ENCODE measurements at regions of chr1 and their contacts with region 1.

Region 1: DNA sequence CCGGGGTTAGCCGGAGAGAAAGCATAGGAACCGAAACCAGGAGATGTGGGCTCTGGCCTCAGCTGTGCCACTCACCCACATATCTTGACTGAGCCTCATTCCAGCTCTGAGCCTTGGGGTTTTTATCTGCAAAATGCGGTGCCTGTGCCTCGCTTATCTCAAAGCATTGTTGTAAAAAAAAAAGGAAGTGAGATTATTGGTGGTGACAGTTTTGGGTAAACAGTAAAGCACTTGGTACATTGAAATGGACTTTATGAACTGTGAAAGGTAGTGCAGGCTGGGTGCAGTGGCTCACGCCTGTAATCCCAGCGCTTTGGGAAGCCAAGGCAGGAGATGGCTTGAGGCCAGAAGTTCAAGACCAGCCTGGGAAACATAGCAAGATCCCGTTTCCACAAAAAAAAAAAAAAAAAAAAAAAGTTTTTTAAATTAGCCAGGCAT is 3.8 kb downstream of the PTAFR start:
- DNase-seq: peak; percentile 65
- H3K4me3 Mint-ChIP-seq: peak overlapping the region; percentile 10
- H3K27ac Mint-ChIP-seq: no peak overlapping the region
- H3K4me1 Mint-ChIP-seq: peaks cover 37% of the 10 kb centered on the region
- H3K27me3 Mint-ChIP-seq: peaks cover 56% of the 10 kb centered on the region

Region 2: GRCh38 chr1:28132171-28133167 is 40.3 kb before region 1 on chr1:
- intact Hi-C with region 1: no loop called
- DNase-seq: no peak
- H3K4me3 Mint-ChIP-seq: no peak overlapping the region
- H3K27ac Mint-ChIP-seq: no peak overlapping the region
- H3K4me1 Mint-ChIP-seq: peaks cover 7% of the 10 kb centered on the region
- H3K27me3 Mint-ChIP-seq: peaks cover 86% of the 10 kb centered on the region

Region 3: GRCh38 chr1:28144203-28145135 is 28.3 kb before region 1 on chr1:
- intact Hi-C with region 1: loop called (anchors 1 kb)
- DNase-seq: no peak
- H3K4me3 Mint-ChIP-seq: no peak overlapping the region
- H3K27ac Mint-ChIP-seq: no peak overlapping the region
- H3K4me1 Mint-ChIP-seq: peaks cover 11% of the 10 kb centered on the region
- H3K27me3 Mint-ChIP-seq: peaks cover 58% of the 10 kb centered on the region